Ovary (tissue), 10 donors: ENCODE measurements at regions of chr6 and their contacts with region 1.

Region 1: GRCh38 chr6:36594029-36594815 is at the start of gene SRSF3:
- DNase-seq: peak; percentile 96 to 97 (median 97)
- H3K4me3 ChIP-seq: peak within 1 kb of the TSS; percentile 79
- H3K27ac ChIP-seq: peak within 1 kb of the TSS; percentile 88 to 93
- H3K4me1 ChIP-seq: peaks cover 9% of the 10 kb centered on the region
- H3K27me3 ChIP-seq: no peaks in the 10 kb centered on the region
- CTCF ChIP-seq: peak; percentile 42 to 80 (median 73)
- EP300 ChIP-seq: no peak
- POLR2A ChIP-seq: peak; percentile 100
- total RNA-seq, gene SRSF3: 146 to 345 (median 280) TPM

Region 2: GRCh38 chr6:36423101-36423824 is 171.0 kb before region 1 on chr6:
- intact Hi-C with region 1: loop called in 1 of 4 experiments (anchors 5 kb)
- DNase-seq: peak; percentile 96 to 99 (median 97)
- H3K4me3 ChIP-seq: peak overlapping the region; percentile 26
- H3K27ac ChIP-seq: peak overlapping the region; percentile 75 to 83
- H3K4me1 ChIP-seq: no peaks in the 10 kb centered on the region
- H3K27me3 ChIP-seq: no peaks in the 10 kb centered on the region
- CTCF ChIP-seq: peak; percentile 58 to 83 (median 83)
- EP300 ChIP-seq: no peak
- POLR2A ChIP-seq: peak; percentile 54

Region 3: DNA sequence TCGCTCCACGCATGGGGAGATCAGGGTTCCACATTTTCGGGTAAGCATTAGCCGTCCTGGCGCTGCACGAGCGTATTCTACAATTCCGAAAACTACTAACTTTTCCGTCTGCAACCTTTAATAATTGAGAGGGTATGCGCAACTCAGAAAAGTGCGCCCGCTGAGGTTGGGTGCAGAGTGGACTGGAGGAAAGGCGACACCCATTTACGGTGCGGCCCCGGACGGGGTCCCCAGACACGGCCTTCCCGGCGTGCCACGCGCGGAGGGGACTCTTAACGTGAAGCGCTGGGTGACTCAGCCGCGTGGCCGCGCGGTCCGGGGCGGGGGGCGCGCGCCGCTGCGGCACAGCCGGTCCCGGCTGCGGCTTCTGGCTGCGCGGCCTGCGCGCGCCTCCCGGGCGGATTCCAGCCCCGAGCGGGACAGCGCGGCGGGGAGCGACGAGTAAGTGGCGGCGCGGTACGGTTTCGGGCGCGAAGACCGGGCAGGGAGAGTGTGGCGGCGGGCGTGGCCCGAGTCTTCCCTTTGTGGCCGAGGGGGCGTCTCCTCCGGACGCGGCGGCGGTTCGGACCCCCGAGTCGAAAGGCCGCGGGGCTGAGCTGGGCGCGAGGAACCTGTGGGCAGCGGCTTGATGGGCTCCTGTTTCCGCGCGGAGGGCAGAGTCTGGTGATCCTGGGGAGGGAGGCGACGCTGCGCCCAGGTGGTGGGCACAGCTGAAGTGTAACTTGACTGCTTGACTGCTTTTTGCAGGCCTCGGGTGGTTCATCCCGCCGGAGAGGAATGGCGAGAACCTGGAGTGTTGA is 151.4 kb before region 1 on chr6 and contains the starts of genes KCTD20 and PXT1:
- intact Hi-C with region 1: loop called in 1 of 4 experiments (anchors 10 kb)
- DNase-seq: peak; percentile 85 to 91 (median 89)
- H3K4me3 ChIP-seq: peak within 1 kb of the TSS; percentile 78
- H3K27ac ChIP-seq: peak within 1 kb of the TSS; percentile 94 to 95
- H3K4me1 ChIP-seq: peaks cover 15% of the 10 kb centered on the region
- H3K27me3 ChIP-seq: no peaks in the 10 kb centered on the region
- CTCF ChIP-seq: peak in 1 of 3 donors; percentile 16
- EP300 ChIP-seq: no peak
- POLR2A ChIP-seq: peak; percentile 79
- total RNA-seq, gene KCTD20: 33.3 to 73.7 (median 46.2) TPM
- total RNA-seq, gene PXT1: not detected

Region 4: DNA sequence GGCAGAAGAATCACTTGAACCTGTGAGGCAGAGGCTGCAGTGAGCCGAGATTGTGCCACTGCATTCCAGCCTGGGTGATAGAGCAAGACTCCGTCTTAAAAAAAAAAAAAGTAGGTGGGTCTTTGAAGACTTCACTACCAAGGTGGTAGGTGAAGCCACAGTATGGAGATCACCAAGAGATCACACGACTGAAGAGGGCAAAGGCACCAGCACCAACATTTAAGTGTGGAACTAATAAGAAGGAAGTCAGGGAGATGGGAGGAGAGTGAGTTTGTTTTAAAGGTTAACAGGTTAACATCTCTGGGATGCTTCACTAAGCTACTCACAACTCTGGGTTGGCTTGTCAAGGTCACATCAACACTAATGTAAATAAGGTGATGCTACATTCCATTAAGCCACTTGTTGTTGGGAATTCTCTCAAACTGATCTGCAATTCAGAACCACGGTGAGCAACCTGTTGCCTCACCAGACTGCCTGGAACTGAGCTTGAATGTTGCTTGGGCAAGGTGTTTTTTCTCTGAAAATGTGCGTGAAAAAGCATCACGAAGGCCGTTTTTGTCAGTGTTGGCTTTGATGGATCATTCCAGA is 102.8 kb before region 1 on chr6:
- intact Hi-C with region 1: no loop called
- DNase-seq: no peak
- H3K4me3 ChIP-seq: no peak overlapping the region
- H3K27ac ChIP-seq: no peak overlapping the region
- H3K4me1 ChIP-seq: peaks cover 2% of the 10 kb centered on the region
- H3K27me3 ChIP-seq: no peaks in the 10 kb centered on the region
- CTCF ChIP-seq: no peak
- EP300 ChIP-seq: no peak
- POLR2A ChIP-seq: no peak

Region 5: DNA sequence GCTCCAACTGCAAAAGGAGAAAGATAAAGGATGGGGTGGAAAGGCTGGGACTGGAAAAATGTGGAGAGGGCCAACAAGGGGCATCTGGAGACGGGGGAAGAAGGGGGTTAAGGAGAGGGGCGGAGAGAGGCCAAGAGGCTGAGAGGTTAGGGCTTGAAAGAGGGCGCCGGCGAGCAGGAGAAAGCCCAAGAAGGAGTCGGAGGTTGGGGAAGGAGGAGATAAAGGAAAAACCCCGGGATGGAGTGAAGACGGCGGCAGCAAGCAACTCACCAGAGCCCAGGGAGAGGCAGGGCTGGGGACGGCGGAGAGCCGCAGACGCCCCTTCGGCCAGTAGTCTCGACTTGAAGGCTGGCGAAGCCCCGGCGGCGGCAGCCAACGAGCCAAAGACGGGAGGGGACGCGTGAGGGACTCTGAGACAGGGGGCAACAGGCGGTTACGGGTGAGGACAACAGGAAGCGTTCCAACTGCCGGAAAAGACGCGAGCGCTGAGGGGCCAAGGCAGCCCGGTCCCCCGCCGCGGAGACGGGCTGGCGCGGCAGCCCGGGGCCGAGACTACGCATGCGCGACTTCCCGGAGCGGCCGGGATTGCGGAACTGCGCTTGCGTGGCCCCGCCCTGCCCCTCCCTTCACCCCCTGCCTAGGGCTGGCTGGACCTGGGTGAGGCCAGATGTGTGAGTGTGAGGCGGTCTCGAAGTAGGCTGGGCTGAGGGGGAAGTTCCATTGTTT is 47.1 kb before region 1 on chr6 and contains the start of gene STK38:
- intact Hi-C with region 1: loop called in 2 of 4 experiments (anchors 5 kb)
- DNase-seq: peak; percentile 93 to 97 (median 95)
- H3K4me3 ChIP-seq: peak within 1 kb of the TSS; percentile 93
- H3K27ac ChIP-seq: peak within 1 kb of the TSS; percentile 85 to 90
- H3K4me1 ChIP-seq: peaks cover 9% of the 10 kb centered on the region
- H3K27me3 ChIP-seq: no peaks in the 10 kb centered on the region
- CTCF ChIP-seq: no peak
- EP300 ChIP-seq: peak; percentile 12
- POLR2A ChIP-seq: peak; percentile 98
- total RNA-seq, gene STK38: 8.9 to 24.2 (median 15.5) TPM